ENCODE measurements at regions of chr14 and their contacts with region 1.

Region 1: GRCh38 chr14:85824526-85824925 is 294.6 kb downstream of the FLRT2 start:
- DNase-seq: no peak
- ATAC-seq: no peak
- H3K4me3 Mint-ChIP-seq: no peak overlapping the region
- H3K27ac Mint-ChIP-seq: no peak overlapping the region
- H3K4me1 Mint-ChIP-seq: no peaks in the 10 kb centered on the region
- H3K27me3 Mint-ChIP-seq: no peaks in the 10 kb centered on the region
- CTCF ChIP-seq: no peak

Region 2: GRCh38 chr14:85554106-85554505 is 270.4 kb before region 1 on chr14:
- CTCF ChIA-PET with region 1: no interaction called
- POLR2A ChIA-PET with region 1: no interaction called
- intact Hi-C with region 1: loop called (anchors 10 kb)
- DNase-seq: no peak
- ATAC-seq: no peak
- H3K4me3 Mint-ChIP-seq: no peak overlapping the region
- H3K27ac Mint-ChIP-seq: no peak overlapping the region
- H3K4me1 Mint-ChIP-seq: no peaks in the 10 kb centered on the region
- H3K27me3 Mint-ChIP-seq: no peaks in the 10 kb centered on the region
- CTCF ChIP-seq: no peak

Region 3: GRCh38 chr14:85811340-85811739 is 13.2 kb before region 1 on chr14:
- CTCF ChIA-PET with region 1: no interaction called
- POLR2A ChIA-PET with region 1: no interaction called
- intact Hi-C with region 1: no loop called
- DNase-seq: no peak
- ATAC-seq: no peak
- H3K4me3 Mint-ChIP-seq: no peak overlapping the region
- H3K27ac Mint-ChIP-seq: no peak overlapping the region
- H3K4me1 Mint-ChIP-seq: peaks cover 1% of the 10 kb centered on the region
- H3K27me3 Mint-ChIP-seq: peaks cover 2% of the 10 kb centered on the region
- CTCF ChIP-seq: no peak

Measured in activated CD8-positive, alpha-beta T cell treated with anti-CD3 and anti-CD28 coated beads for 36 hours (primary cell).